HCT116 (cell line): ENCODE measurements at regions of chr12 and their contacts with region 1.

Region 1: DNA sequence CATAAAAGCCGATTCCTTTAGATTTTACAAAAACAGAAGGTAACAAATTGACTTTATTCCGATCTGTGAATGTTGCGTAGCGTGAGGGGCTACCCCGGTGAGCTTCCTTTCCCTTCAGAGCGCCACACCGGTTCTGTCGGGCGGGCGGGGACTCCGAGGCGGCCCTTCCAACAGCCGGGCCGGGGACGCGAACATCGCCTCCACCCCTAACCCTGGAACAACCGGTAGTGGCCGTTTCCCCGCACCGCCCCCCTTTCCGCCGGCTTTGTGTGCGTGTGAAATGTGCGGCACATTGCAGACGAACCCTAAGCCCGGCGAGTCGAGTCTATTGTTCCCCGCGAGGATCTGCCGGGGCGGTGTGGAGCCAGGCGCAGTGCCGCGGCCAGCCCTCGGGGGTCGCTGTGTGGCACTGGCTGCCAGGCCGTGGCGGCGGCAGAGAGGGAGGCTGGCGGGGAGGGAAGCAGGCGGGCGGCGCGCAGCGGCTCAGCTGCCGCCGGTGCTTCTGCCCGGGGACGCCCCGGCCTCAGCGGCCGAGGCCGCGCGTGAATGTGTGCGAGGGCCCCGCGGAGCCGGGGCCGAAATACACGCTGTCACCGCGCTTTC is 775 bp upstream of the ARID2 start:
- DNase-seq: peak; percentile 94
- ATAC-seq: peak; percentile 75
- H3K4me3 ChIP-seq: peak overlapping the region; percentile 84 to 85
- H3K27ac ChIP-seq: peak overlapping the region; percentile 94
- H3K4me1 ChIP-seq: peaks cover 12 to 32% of the 10 kb centered on the region in 2 experiments; a peak in 3 of 4 replicates
- H3K27me3 ChIP-seq: no peaks in the 10 kb centered on the region
- CTCF ChIP-seq: peak; percentile 55 to 88 (median 80)
- POLR2A ChIP-seq: peak; percentile 34
- RAD21 ChIP-seq: no peak

Region 2: GRCh38 chr12:45130881-45131281 is 597.9 kb before region 1 on chr12:
- CTCF ChIA-PET with region 1: no interaction called
- POLR2A ChIA-PET with region 1: no interaction called
- RAD21 ChIA-PET with region 1: no interaction called
- intact Hi-C with region 1: loop called (anchors 2 kb)
- DNase-seq: peak; percentile 63
- ATAC-seq: peak; percentile 94
- H3K4me3 ChIP-seq: no peak overlapping the region
- H3K27ac ChIP-seq: no peak overlapping the region
- H3K4me1 ChIP-seq: no peaks in the 10 kb centered on the region
- H3K27me3 ChIP-seq: no peaks in the 10 kb centered on the region
- CTCF ChIP-seq: peak; percentile 67 to 84 (median 68); a peak in 5 of 6 replicates
- POLR2A ChIP-seq: no peak
- RAD21 ChIP-seq: peak; percentile 92

Region 3: GRCh38 chr12:45170456-45171042 is 558.2 kb before region 1 on chr12:
- CTCF ChIA-PET with region 1: interaction called, 3 read pairs
- POLR2A ChIA-PET with region 1: no interaction called
- RAD21 ChIA-PET with region 1: no interaction called
- intact Hi-C with region 1: loop called (anchors 5 kb)
- DNase-seq: peak; percentile 62
- ATAC-seq: peak; percentile 87
- H3K4me3 ChIP-seq: no peak overlapping the region
- H3K27ac ChIP-seq: no peak overlapping the region
- H3K4me1 ChIP-seq: no peaks in the 10 kb centered on the region
- H3K27me3 ChIP-seq: no peaks in the 10 kb centered on the region
- CTCF ChIP-seq: peak; percentile 57 to 95 (median 90); a peak in 5 of 6 replicates
- POLR2A ChIP-seq: no peak
- RAD21 ChIP-seq: peak; percentile 84

Region 4: GRCh38 chr12:45234139-45234846 is 494.4 kb before region 1 on chr12:
- CTCF ChIA-PET with region 1: no interaction called
- POLR2A ChIA-PET with region 1: no interaction called
- RAD21 ChIA-PET with region 1: no interaction called
- intact Hi-C with region 1: loop called (anchors 5 kb)
- DNase-seq: peak; percentile 88
- ATAC-seq: peak; percentile 67
- H3K4me3 ChIP-seq: peak overlapping the region; percentile 15 to 47
- H3K27ac ChIP-seq: peak overlapping the region; percentile 60
- H3K4me1 ChIP-seq: peaks cover 57 to 62% of the 10 kb centered on the region in 2 experiments
- H3K27me3 ChIP-seq: no peaks in the 10 kb centered on the region
- CTCF ChIP-seq: no peak
- POLR2A ChIP-seq: no peak
- RAD21 ChIP-seq: no peak

Region 5: GRCh38 chr12:45268672-45269411 is 459.9 kb before region 1 on chr12:
- CTCF ChIA-PET with region 1: no interaction called
- POLR2A ChIA-PET with region 1: no interaction called
- RAD21 ChIA-PET with region 1: no interaction called
- intact Hi-C with region 1: loop called (anchors 10 kb)
- DNase-seq: peak; percentile 56
- ATAC-seq: peak; percentile 75
- H3K4me3 ChIP-seq: peak overlapping the region in 1 of 2 experiments; percentile 19; a peak in 2 of 4 replicates
- H3K27ac ChIP-seq: peak overlapping the region; percentile 77
- H3K4me1 ChIP-seq: peaks cover 31 to 42% of the 10 kb centered on the region in 2 experiments
- H3K27me3 ChIP-seq: no peaks in the 10 kb centered on the region
- CTCF ChIP-seq: peak; percentile 56 to 78 (median 63); a peak in 5 of 6 replicates
- POLR2A ChIP-seq: no peak
- RAD21 ChIP-seq: peak; percentile 74

Region 6: GRCh38 chr12:45543906-45544315 is 184.8 kb before region 1 on chr12:
- CTCF ChIA-PET with region 1: interaction called, 18 read pairs
- POLR2A ChIA-PET with region 1: interaction called, 3 read pairs
- RAD21 ChIA-PET with region 1: no interaction called
- intact Hi-C with region 1: loop called (anchors 5 kb)
- DNase-seq: peak; percentile 80
- ATAC-seq: peak; percentile 96
- H3K4me3 ChIP-seq: no peak overlapping the region
- H3K27ac ChIP-seq: no peak overlapping the region
- H3K4me1 ChIP-seq: no peaks in the 10 kb centered on the region
- H3K27me3 ChIP-seq: no peaks in the 10 kb centered on the region
- CTCF ChIP-seq: peak; percentile 78 to 86 (median 81)
- POLR2A ChIP-seq: no peak
- RAD21 ChIP-seq: peak; percentile 83

Region 7: DNA sequence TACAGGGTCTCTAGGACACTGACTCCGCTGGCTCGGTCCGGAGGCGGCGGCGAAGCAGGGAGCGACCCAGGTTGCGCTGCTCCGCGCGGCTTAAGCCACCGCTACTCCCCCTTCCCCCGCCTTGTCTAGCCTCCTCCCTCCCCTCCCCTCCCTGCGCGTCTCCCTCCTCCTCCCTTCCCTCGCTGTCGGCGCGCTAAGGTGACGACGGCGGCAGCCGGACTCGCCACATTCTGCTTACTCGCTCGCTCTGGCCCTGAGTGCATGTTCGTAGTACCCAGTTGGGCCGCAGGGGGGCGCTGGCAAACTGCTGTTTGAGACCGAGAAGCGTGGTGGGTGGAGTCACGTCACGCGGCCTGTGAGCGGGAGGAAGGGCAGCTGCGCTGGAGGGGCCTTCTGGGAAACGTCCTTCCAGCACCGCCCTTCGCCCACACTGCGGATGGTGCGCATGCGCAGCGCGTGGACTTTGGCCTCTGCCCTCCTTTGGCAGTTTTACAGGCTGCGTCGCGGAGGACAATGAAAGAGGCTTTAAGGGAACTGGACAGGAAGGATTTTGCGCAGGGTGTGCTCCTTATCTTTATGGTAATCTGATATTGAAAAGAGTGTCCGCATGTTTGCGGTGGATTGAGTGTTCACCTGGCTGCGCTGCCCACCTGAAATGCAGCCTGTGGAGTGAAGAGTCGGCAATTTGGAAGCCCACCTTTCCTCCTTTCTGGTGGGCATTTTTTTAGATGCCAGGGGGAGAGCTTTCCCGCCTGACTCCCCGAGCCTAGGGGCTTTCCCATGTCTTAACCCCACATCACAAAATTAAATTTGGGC is 261.9 kb after region 1 on chr12 and contains the start of gene SCAF11:
- CTCF ChIA-PET with region 1: interaction called, 3 read pairs
- POLR2A ChIA-PET with region 1: interaction called, 4 read pairs
- RAD21 ChIA-PET with region 1: no interaction called
- intact Hi-C with region 1: loop called (anchors 2 kb)
- DNase-seq: peak; percentile 100
- ATAC-seq: peak; percentile 84
- H3K4me3 ChIP-seq: peak within 1 kb of the TSS; percentile 85 to 89
- H3K27ac ChIP-seq: peak within 1 kb of the TSS; percentile 98
- H3K4me1 ChIP-seq: peaks cover 13 to 22% of the 10 kb centered on the region in 2 experiments
- H3K27me3 ChIP-seq: no peaks in the 10 kb centered on the region
- CTCF ChIP-seq: peak; percentile 81 to 92 (median 91); a peak in 5 of 6 replicates
- POLR2A ChIP-seq: peak; percentile 74
- RAD21 ChIP-seq: peak; percentile 98
- total RNA-seq, gene SCAF11: 79.8 TPM